ENCODE measurements at regions of chr4 and their contacts with region 1.

Region 1: DNA sequence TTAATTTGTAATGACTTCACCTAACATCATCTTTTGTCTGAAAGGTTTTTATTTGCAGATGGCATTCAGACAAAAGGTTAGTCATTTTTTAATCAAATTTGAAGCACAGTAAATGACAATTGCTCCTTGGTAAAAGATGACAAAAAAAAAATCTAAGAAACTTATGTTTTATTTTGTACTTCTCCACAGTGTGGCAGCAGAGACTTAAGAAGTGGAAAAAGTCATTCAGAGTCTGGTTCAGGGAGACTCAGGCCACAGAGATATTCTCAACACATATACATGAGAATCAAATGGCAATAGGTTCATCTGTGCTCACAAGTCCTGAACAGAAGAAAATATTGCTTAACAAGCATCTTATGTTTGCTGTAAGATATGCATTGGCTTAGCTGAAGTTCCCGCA is 436.2 kb downstream of the KCNIP4 start:
- DNase-seq: peak; percentile 46
- H3K4me3 ChIP-seq: no peak overlapping the region; a peak in 1 of 4 replicates
- H3K27ac ChIP-seq: peak overlapping the region in 1 of 2 experiments; percentile 69; a peak in 2 of 4 replicates
- H3K4me1 ChIP-seq: peaks cover 0 to 9% of the 10 kb centered on the region in 2 experiments; a peak in 2 of 4 replicates
- H3K27me3 ChIP-seq: no peaks in the 10 kb centered on the region
- CTCF ChIP-seq: peak; percentile 69
- EP300 ChIP-seq: no peak
- RAD21 ChIP-seq: peak; percentile 98

Region 2: DNA sequence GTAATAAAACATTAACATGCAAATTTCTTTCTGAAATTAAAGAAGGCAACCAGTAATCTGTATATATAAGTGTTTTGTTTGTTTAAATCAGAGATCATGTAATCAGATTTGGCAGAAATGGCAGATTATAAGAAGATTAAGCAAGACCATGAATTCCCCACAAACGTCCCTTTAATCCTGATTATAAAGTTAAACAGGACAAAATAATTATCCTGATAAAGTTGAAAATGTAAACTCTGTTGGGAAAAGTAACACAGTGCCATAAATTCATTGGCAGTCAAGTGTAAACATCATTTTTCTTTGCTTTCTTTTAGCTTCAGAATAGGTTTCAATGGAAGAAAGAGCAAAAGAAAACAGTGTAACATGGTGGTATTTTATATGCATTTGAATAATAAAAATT is 179.9 kb after region 1 on chr4:
- CTCF ChIA-PET with region 1: interaction called, 12 read pairs
- POLR2A ChIA-PET with region 1: no interaction called
- DNase-seq: no peak
- H3K4me3 ChIP-seq: no peak overlapping the region
- H3K27ac ChIP-seq: no peak overlapping the region
- H3K4me1 ChIP-seq: peaks cover 0 to 2% of the 10 kb centered on the region in 2 experiments; a peak in 2 of 4 replicates
- H3K27me3 ChIP-seq: no peaks in the 10 kb centered on the region
- CTCF ChIP-seq: no peak
- EP300 ChIP-seq: no peak
- RAD21 ChIP-seq: no peak

Region 3: GRCh38 chr4:21753084-21753760 is 240.9 kb after region 1 on chr4:
- CTCF ChIA-PET with region 1: interaction called, 16 read pairs
- POLR2A ChIA-PET with region 1: no interaction called
- DNase-seq: peak; percentile 12
- H3K4me3 ChIP-seq: no peak overlapping the region
- H3K27ac ChIP-seq: peak overlapping the region in 1 of 2 experiments; percentile 87; a peak in 2 of 4 replicates
- H3K4me1 ChIP-seq: peaks cover 0 to 19% of the 10 kb centered on the region in 2 experiments; a peak in 2 of 4 replicates
- H3K27me3 ChIP-seq: no peaks in the 10 kb centered on the region
- CTCF ChIP-seq: no peak
- EP300 ChIP-seq: peak in 1 of 2 experiments; percentile 72; a peak in 2 of 4 replicates
- RAD21 ChIP-seq: no peak

Measured in SK-N-SH (cell line).